ENCODE measurements at regions of chr6 and their contacts with region 1.

Region 1: DNA sequence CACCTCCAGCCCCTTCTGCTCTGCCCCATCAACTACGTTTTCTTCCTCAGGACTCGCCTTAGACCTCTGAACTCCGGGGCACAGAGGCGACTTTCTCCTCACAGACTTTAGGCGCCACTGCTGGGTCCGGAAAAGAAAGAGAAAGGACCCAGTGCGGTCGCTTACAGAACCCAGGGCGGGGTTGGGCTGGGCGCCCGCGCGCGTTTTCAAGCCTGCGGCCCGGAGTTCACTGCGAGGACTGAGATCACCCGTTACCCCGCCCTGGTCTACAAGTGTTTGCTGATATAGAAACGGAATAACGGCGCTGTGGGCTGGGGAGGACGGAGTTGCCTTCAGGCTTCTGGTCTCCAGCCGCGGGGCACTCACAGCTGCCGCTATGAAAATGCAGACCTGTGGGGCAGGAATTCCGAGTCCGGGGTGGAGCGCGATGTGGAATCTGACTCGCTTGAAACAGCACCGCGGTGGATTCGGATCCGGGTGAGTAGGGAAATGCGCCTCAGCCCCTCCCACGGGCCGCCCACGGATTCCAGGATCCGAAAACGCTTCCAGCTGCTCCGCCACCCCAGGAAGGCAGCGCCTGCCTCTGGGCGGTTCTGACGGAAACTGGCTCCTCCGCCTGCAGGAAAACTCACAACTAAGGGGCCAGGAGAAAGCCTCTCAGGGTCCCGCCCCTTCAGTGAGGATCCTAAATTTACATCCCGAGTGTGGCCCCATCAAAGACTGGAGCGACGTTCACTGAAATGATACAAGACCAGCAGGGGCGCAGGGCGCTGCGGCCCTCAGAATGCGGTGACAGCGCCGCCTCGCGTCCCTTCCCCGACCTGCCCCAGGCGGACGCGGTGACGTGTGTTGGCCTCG is 29.4 kb downstream of the HLA-F start:
- DNase-seq: peak; percentile 92
- H3K4me3 ChIP-seq: peak overlapping the region; percentile 62 to 86 (median 68)
- H3K27ac ChIP-seq: peak overlapping the region; percentile 85
- H3K4me1 ChIP-seq: peaks cover 23% of the 10 kb centered on the region
- H3K27me3 ChIP-seq: no peaks in the 10 kb centered on the region
- CTCF ChIP-seq: peak; percentile 90 to 99

Region 2: GRCh38 chr6:29705389-29706231 is 47.1 kb before region 1 on chr6:
- CTCF ChIA-PET with region 1: no interaction called
- dilution Hi-C with region 1: no loop called
- in situ Hi-C with region 1: no loop called
- intact Hi-C with region 1: loop called (anchors 5 kb)
- DNase-seq: peak; percentile 32
- H3K4me3 ChIP-seq: no peak overlapping the region
- H3K27ac ChIP-seq: no peak overlapping the region
- H3K4me1 ChIP-seq: no peaks in the 10 kb centered on the region
- H3K27me3 ChIP-seq: no peaks in the 10 kb centered on the region
- CTCF ChIP-seq: peak; percentile 41 to 53

Region 3: DNA sequence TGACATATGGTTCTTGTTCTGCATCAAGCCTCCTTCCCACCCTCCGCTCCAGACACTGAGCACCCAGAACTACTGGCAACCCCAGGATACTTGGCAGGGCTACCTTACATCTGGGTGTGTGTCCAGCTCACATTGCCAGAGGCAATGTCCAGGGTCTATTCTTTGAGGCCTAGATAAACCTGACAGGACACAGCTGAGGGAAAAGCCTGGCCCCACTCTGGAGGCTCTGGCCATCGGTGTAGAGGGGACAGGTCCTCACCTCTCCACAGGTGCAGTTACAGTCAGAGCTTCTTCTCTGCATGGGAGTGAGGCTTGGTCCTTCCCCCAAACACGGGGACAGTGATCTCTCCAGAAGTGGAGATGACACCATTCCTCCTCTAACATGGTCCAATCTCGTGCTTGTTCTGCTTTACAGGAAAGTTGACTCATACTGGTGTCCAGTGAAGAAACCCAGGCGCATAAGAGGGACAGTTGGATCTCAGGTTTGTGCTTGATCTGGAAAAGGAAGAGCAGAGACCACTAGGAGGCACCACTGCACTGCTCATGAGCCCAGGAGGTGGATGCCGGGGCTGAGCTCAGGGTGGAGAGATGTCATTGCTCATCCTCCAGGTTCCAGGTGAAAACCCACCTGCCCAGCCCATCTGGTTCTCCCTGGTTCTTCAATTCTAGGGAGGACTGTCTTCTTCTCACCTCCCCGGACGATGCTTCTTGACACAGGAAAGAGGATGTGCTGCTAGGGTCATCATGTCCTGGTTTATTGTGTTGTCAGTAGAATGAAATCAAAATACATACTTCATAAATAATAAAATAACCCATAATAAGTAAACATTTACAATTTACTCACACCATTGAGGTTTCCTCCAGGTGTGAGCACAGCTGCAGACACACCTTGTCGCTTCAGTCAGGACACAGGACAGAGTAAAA is 14.7 kb before region 1 on chr6:
- CTCF ChIA-PET with region 1: no interaction called
- dilution Hi-C with region 1: no loop called
- in situ Hi-C with region 1: no loop called
- intact Hi-C with region 1: loop called (anchors 1 kb)
- DNase-seq: peak; percentile 74
- H3K4me3 ChIP-seq: no peak overlapping the region
- H3K27ac ChIP-seq: no peak overlapping the region
- H3K4me1 ChIP-seq: peaks cover 14% of the 10 kb centered on the region
- H3K27me3 ChIP-seq: no peaks in the 10 kb centered on the region
- CTCF ChIP-seq: peak; percentile 76 to 88

Region 4: GRCh38 chr6:29763491-29764289 is 11.0 kb after region 1 on chr6:
- CTCF ChIA-PET with region 1: no interaction called
- dilution Hi-C with region 1: no loop called
- in situ Hi-C with region 1: no loop called
- intact Hi-C with region 1: loop called (anchors 1 kb)
- DNase-seq: peak; percentile 95
- H3K4me3 ChIP-seq: no peak overlapping the region
- H3K27ac ChIP-seq: peak overlapping the region; percentile 81
- H3K4me1 ChIP-seq: peaks cover 41% of the 10 kb centered on the region
- H3K27me3 ChIP-seq: no peaks in the 10 kb centered on the region
- CTCF ChIP-seq: no peak

Region 5: GRCh38 chr6:29827579-29828470 is 75.1 kb after region 1 on chr6 and contains the start of gene HLA-G:
- CTCF ChIA-PET with region 1: no interaction called
- dilution Hi-C with region 1: no loop called
- in situ Hi-C with region 1: loop called in 1 of 2 experiments (anchors 10 kb)
- intact Hi-C with region 1: no loop called
- DNase-seq: no peak
- H3K4me3 ChIP-seq: peak within 1 kb of the TSS in 1 of 3 experiments; percentile 28
- H3K27ac ChIP-seq: no peak within 1 kb of the TSS
- H3K4me1 ChIP-seq: peaks cover 17% of the 10 kb centered on the region
- H3K27me3 ChIP-seq: peaks cover 2% of the 10 kb centered on the region
- CTCF ChIP-seq: no peak
- total RNA-seq, gene HLA-G: 0.33 TPM in 1 of 2 donors, not detected in the other

Region 6: GRCh38 chr6:30013291-30013922 is 260.7 kb after region 1 on chr6:
- CTCF ChIA-PET with region 1: no interaction called
- dilution Hi-C with region 1: no loop called
- in situ Hi-C with region 1: loop called in 1 of 2 experiments (anchors 25 kb)
- intact Hi-C with region 1: no loop called
- DNase-seq: no peak
- H3K4me3 ChIP-seq: no peak overlapping the region
- H3K27ac ChIP-seq: no peak overlapping the region
- H3K4me1 ChIP-seq: no peaks in the 10 kb centered on the region
- H3K27me3 ChIP-seq: no peaks in the 10 kb centered on the region
- CTCF ChIP-seq: peak; percentile 59 to 87

Measured in mammary epithelial cell (primary cell).